ENCODE measurements at regions of chr13 and their contacts with region 1.

Region 1: GRCh38 chr13:37984357-37984756 is 114.8 kb upstream of the TRPC4 start:
- DNase-seq: peak; percentile 94
- H3K4me3 ChIP-seq: peak overlapping the region; percentile 44
- H3K27ac ChIP-seq: peak overlapping the region; percentile 88
- H3K4me1 ChIP-seq: peaks cover 19% of the 10 kb centered on the region
- H3K27me3 ChIP-seq: no peaks in the 10 kb centered on the region
- CTCF ChIP-seq: peak; percentile 65

Region 2: GRCh38 chr13:37929308-37929707 is 55.0 kb before region 1 on chr13:
- CTCF ChIA-PET with region 1: no interaction called
- POLR2A ChIA-PET with region 1: no interaction called
- intact Hi-C with region 1: no loop called
- DNase-seq: no peak
- H3K4me3 ChIP-seq: no peak overlapping the region
- H3K27ac ChIP-seq: no peak overlapping the region
- H3K4me1 ChIP-seq: no peaks in the 10 kb centered on the region
- H3K27me3 ChIP-seq: no peaks in the 10 kb centered on the region
- CTCF ChIP-seq: no peak

Region 3: DNA sequence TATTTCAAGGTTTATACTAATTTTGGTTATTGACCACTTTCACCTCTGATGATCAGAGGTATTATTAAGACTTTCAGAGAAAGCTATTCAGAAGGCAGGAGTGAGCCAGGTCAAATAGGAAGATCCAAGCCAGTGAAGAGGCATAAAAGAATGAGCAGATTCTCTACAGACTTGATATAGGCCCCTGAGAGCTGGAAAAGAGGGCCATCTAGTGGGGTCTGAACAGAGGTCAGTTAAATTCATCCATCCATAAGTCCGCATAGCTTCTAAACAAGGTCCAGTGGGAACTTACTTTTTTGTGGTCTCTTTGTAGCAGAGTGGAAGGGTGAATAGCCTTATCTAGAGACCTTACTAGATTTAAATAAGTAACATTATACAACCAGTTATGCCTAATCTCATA is 238.7 kb after region 1 on chr13:
- CTCF ChIA-PET with region 1: no interaction called
- POLR2A ChIA-PET with region 1: no interaction called
- intact Hi-C with region 1: loop called (anchors 2 kb)
- DNase-seq: peak; percentile 70
- H3K4me3 ChIP-seq: no peak overlapping the region
- H3K27ac ChIP-seq: no peak overlapping the region
- H3K4me1 ChIP-seq: no peaks in the 10 kb centered on the region
- H3K27me3 ChIP-seq: no peaks in the 10 kb centered on the region
- CTCF ChIP-seq: peak; percentile 59

Region 4: DNA sequence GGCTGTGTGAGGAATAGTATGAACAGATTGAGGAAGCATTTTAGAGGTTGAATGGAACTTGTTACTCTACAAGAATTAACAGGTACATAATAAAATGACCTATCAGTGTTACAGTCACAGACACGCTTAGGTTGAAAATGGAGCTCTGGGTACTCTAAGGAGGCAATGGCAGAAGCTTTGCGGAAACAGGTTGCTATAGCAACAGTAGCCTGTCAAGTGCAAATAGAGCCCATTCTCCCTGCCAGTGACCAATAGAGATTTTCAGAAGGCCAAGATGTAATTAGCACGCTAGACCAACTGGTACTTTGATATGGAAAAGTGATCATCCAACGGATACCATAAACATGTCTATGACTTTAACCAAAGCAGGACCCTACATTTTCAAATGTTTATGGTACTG is 554.1 kb after region 1 on chr13:
- CTCF ChIA-PET with region 1: no interaction called
- POLR2A ChIA-PET with region 1: no interaction called
- intact Hi-C with region 1: loop called (anchors 5 kb)
- DNase-seq: no peak
- H3K4me3 ChIP-seq: no peak overlapping the region
- H3K27ac ChIP-seq: no peak overlapping the region
- H3K4me1 ChIP-seq: no peaks in the 10 kb centered on the region
- H3K27me3 ChIP-seq: no peaks in the 10 kb centered on the region
- CTCF ChIP-seq: no peak

Measured in A673 (cell line).